ENCODE measurements at regions of chr20 and their contacts with region 1.

Region 1: GRCh38 chr20:19205977-19206396 is 6.5 kb upstream of the SLC24A3 start:
- H3K4me3 Mint-ChIP-seq: no peak overlapping the region
- H3K27ac Mint-ChIP-seq: no peak overlapping the region
- H3K4me1 Mint-ChIP-seq: no peaks in the 10 kb centered on the region
- H3K27me3 Mint-ChIP-seq: peaks cover 18% of the 10 kb centered on the region

Region 2: GRCh38 chr20:19583532-19584175 is 377.7 kb after region 1 on chr20:
- intact Hi-C with region 1: loop called (anchors 1 kb)
- H3K4me3 Mint-ChIP-seq: no peak overlapping the region
- H3K27ac Mint-ChIP-seq: no peak overlapping the region
- H3K4me1 Mint-ChIP-seq: no peaks in the 10 kb centered on the region
- H3K27me3 Mint-ChIP-seq: no peaks in the 10 kb centered on the region

Region 3: GRCh38 chr20:19661717-19662636 is 456.0 kb after region 1 on chr20:
- intact Hi-C with region 1: loop called (anchors 1 kb)
- H3K4me3 Mint-ChIP-seq: no peak overlapping the region
- H3K27ac Mint-ChIP-seq: no peak overlapping the region
- H3K4me1 Mint-ChIP-seq: peaks cover 44% of the 10 kb centered on the region
- H3K27me3 Mint-ChIP-seq: peaks cover 31% of the 10 kb centered on the region